ENCODE measurements at regions of chr13 and their contacts with region 1.

Region 1: DNA sequence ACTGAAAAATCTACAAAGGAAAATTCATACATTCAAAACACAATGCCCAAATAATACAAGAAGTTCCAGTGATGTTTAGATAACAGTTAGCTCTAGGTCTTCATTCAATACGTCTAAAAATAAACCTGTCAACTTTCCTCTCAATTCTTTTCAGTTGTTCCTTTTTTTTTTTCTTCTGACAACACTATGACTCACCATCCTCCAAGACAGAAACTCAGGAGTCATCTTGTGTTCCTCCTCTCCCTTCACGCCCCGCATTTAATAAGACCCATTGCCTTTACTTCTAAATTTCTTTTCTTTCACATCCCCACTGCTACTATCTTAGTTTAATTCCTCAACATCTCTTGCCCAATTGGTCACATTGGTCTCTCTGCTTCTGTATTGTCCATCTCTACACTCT is 759.9 kb downstream of the GPC5 start:
- DNase-seq: no peak
- H3K4me3 ChIP-seq: no peak overlapping the region
- H3K27ac ChIP-seq: no peak overlapping the region
- H3K4me1 ChIP-seq: no peaks in the 10 kb centered on the region
- H3K27me3 ChIP-seq: no peaks in the 10 kb centered on the region
- CTCF ChIP-seq: no peak
- POLR2A ChIP-seq: no peak

Region 2: GRCh38 chr13:91174886-91175501 is 983.4 kb before region 1 on chr13:
- intact Hi-C with region 1: no loop called
- DNase-seq: no peak
- H3K4me3 ChIP-seq: peak overlapping the region; percentile 25 to 65 (median 40)
- H3K27ac ChIP-seq: no peak overlapping the region
- H3K4me1 ChIP-seq: no peaks in the 10 kb centered on the region
- H3K27me3 ChIP-seq: peaks cover 0 to 13% of the 10 kb centered on the region in 2 donors
- CTCF ChIP-seq: no peak
- POLR2A ChIP-seq: no peak

Region 3: GRCh38 chr13:91836554-91836953 is 321.8 kb before region 1 on chr13:
- intact Hi-C with region 1: loop called (anchors 5 kb)
- DNase-seq: no peak
- H3K4me3 ChIP-seq: no peak overlapping the region
- H3K27ac ChIP-seq: no peak overlapping the region
- H3K4me1 ChIP-seq: no peaks in the 10 kb centered on the region
- H3K27me3 ChIP-seq: no peaks in the 10 kb centered on the region
- CTCF ChIP-seq: no peak
- POLR2A ChIP-seq: no peak

Region 4: GRCh38 chr13:92175330-92175729 is 17.0 kb after region 1 on chr13:
- intact Hi-C with region 1: no loop called
- DNase-seq: no peak
- H3K4me3 ChIP-seq: no peak overlapping the region
- H3K27ac ChIP-seq: no peak overlapping the region
- H3K4me1 ChIP-seq: no peaks in the 10 kb centered on the region
- H3K27me3 ChIP-seq: no peaks in the 10 kb centered on the region
- CTCF ChIP-seq: no peak
- POLR2A ChIP-seq: no peak

Region 5: GRCh38 chr13:92573467-92574057 is 415.2 kb after region 1 on chr13:
- intact Hi-C with region 1: no loop called
- DNase-seq: no peak
- H3K4me3 ChIP-seq: no peak overlapping the region
- H3K27ac ChIP-seq: no peak overlapping the region
- H3K4me1 ChIP-seq: no peaks in the 10 kb centered on the region
- H3K27me3 ChIP-seq: no peaks in the 10 kb centered on the region
- CTCF ChIP-seq: no peak
- POLR2A ChIP-seq: no peak

Region 6: DNA sequence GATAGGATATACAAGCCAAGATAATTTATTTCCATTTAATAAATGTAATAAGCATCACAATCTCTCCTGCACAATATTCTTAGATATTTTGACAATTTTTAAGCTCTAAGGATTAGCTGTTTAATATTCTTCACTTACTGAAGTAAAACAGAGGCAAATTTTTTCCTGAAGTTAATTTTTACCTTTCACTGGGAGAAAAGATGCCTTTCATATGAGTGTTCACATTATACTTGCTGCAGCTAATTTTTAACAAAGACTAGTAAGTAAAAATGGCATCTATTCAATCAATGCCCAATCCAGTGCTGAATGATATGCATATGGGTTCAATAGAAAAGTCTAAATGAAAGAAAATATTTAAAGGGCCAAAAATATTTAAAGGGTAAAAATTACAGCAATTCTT is 691.0 kb after region 1 on chr13:
- intact Hi-C with region 1: no loop called
- DNase-seq: no peak
- H3K4me3 ChIP-seq: no peak overlapping the region
- H3K27ac ChIP-seq: no peak overlapping the region
- H3K4me1 ChIP-seq: no peaks in the 10 kb centered on the region
- H3K27me3 ChIP-seq: no peaks in the 10 kb centered on the region
- CTCF ChIP-seq: no peak
- POLR2A ChIP-seq: no peak

Measured in breast epithelium (tissue), 4 donors.